Activated CD4-positive, alpha-beta memory T cell treated with anti-CD3 and anti-CD28 coated beads, Interleukin-2, amount 10 ng/mL, durations not matched to agents 7 days and 5 days (primary cell): ENCODE measurements at regions of chr1 and their contacts with region 1.

Region 1: GRCh38 chr1:110780600-110781484 is 92.1 kb upstream of the CD53 start:
- DNase-seq: peak; percentile 80
- H3K4me3 Mint-ChIP-seq: no peak overlapping the region
- H3K27ac Mint-ChIP-seq: no peak overlapping the region
- H3K4me1 Mint-ChIP-seq: peaks cover 35% of the 10 kb centered on the region
- H3K27me3 Mint-ChIP-seq: peaks cover 3% of the 10 kb centered on the region

Region 2: DNA sequence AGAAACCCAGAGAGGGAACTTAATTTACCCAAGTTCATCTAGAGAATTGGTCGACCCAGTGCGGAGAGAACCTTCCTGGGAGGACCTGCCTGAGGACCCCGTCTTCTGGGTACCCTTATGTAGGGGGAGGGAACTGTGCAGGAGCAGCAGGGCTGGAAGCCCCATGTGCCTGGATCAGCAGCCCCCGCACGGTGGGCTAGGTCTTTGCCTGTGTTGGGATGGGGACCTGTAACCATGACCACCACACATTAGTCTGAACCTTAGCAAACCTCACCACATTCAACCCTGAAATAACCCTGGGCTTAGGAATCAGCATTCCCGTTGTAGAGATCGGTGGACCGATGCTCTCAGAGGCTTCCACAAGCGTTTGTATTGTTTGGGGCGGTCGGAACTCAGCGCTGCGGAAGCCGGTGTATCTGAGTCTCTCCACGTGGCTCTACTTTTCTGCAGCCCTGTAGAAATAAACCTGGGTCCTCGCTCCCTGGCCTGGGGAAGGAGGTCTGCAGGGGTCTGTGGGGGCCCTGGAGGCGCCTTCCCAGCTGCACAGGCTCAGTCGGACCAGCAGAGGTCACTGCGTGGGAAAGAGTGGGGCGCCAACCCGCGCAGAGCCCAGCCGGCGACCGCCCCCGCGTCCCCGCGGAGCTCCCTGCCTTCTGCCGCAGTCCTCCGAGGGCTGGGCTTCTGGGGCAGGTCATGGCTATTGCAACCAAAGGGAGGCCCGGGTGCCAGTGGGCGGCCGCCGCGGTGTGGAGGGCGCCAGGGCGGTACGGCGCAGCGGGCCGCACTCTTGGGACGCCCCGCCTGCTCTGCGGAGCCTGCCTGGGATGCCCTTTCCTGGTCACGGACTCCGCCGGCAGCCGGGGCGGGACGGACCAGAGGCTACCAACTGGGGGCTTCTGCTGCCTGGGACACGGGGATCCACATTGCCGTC is 225.7 kb before region 1 on chr1:
- CTCF ChIA-PET with region 1: interaction called, 33 read pairs
- POLR2A ChIA-PET with region 1: no interaction called
- DNase-seq: peak; percentile 54
- H3K4me3 Mint-ChIP-seq: no peak overlapping the region
- H3K27ac Mint-ChIP-seq: no peak overlapping the region
- H3K4me1 Mint-ChIP-seq: peaks cover 12% of the 10 kb centered on the region
- H3K27me3 Mint-ChIP-seq: peaks cover 62% of the 10 kb centered on the region

Region 3: GRCh38 chr1:110612065-110612751 is 168.6 kb before region 1 on chr1:
- CTCF ChIA-PET with region 1: interaction called, 135 read pairs
- POLR2A ChIA-PET with region 1: interaction called, 3 read pairs
- DNase-seq: peak; percentile 11
- H3K4me3 Mint-ChIP-seq: no peak overlapping the region
- H3K27ac Mint-ChIP-seq: no peak overlapping the region
- H3K4me1 Mint-ChIP-seq: peaks cover 58% of the 10 kb centered on the region
- H3K27me3 Mint-ChIP-seq: peaks cover 22% of the 10 kb centered on the region

Region 4: DNA sequence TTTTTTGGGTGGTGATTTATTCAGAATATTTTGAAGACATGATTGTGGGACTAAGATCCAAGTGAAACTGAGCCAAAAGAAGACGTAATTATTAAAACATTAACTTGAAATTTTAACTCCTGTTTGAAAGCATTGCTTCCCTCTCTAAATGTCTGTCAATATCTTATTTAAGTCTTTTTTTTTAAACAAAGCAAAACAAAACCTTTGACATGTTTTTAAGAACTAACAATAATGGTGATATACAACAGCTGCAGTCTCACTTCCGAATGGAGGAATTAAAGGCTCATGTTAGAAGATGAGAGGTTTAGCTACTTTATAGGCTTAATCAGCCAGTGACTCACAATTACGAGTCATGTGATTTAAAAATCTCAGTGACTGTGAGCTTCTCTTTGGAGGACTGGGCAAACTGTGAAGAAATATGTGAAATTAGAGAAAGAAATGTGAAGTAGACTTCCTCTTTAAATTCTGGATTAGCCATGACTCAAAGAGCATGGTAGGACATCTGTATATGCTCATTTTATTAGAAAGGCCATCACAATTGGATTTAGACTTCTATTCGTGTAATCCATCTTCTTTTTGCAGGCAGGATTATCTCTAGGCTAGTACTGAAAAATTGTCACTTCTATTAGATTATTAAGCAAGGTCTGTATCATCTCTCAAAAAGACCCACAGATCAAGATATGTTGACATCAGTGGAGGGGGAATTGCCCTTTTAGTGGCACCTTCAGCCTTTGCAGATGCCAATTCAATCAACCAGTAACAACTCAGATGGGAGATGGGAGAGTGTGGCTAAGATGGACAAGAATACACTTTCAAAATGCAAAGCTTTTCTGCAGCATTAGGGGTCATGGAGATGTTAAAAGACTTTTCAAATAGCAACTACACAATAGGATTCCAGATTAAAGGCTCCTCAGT is 134.8 kb before region 1 on chr1:
- CTCF ChIA-PET with region 1: interaction called, 11 read pairs
- POLR2A ChIA-PET with region 1: no interaction called
- DNase-seq: no peak
- H3K4me3 Mint-ChIP-seq: peak overlapping the region; percentile 1
- H3K27ac Mint-ChIP-seq: no peak overlapping the region
- H3K4me1 Mint-ChIP-seq: peaks cover 47% of the 10 kb centered on the region
- H3K27me3 Mint-ChIP-seq: no peaks in the 10 kb centered on the region

Region 5: GRCh38 chr1:110718452-110718851 is 62.4 kb before region 1 on chr1:
- CTCF ChIA-PET with region 1: no interaction called
- POLR2A ChIA-PET with region 1: no interaction called
- DNase-seq: no peak
- H3K4me3 Mint-ChIP-seq: no peak overlapping the region
- H3K27ac Mint-ChIP-seq: no peak overlapping the region
- H3K4me1 Mint-ChIP-seq: peaks cover 3% of the 10 kb centered on the region
- H3K27me3 Mint-ChIP-seq: peaks cover 6% of the 10 kb centered on the region

Region 6: GRCh38 chr1:110829955-110830553 is 49.2 kb after region 1 on chr1:
- CTCF ChIA-PET with region 1: interaction called, 39 read pairs
- POLR2A ChIA-PET with region 1: no interaction called
- DNase-seq: peak; percentile 18
- H3K4me3 Mint-ChIP-seq: no peak overlapping the region
- H3K27ac Mint-ChIP-seq: no peak overlapping the region
- H3K4me1 Mint-ChIP-seq: peaks cover 3% of the 10 kb centered on the region
- H3K27me3 Mint-ChIP-seq: peaks cover 5% of the 10 kb centered on the region

Region 7: DNA sequence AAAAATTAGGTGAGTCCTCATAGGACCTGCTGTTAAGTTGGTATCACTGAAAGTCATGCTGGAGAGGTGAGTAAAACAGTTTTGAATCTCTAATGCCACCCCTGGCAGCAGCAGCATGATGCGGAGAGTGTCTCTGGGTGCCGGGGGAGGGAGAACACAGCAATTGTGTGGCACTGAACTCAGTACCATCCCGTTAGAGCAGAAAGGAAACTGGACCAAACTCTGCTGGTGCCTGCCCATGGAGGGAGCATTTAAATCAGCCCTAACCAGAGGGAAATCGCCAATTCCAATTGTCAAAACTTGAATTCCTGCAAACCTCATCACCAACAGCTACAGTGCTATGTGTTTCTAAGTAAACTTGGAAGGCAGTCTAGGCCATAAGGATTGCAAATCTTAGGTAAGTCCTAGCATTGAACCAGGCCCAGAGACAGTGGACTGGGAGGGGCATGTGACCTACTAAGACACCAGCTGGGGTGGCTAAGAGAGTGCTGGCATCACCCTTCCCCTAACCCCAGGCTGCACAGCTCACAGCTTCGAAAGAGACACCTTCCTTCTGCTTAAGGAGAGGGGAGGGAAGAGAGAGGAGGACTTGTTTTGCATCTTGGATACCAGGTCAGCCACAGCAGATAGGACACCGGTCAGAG is 122.1 kb after region 1 on chr1:
- CTCF ChIA-PET with region 1: no interaction called
- POLR2A ChIA-PET with region 1: no interaction called
- DNase-seq: no peak
- H3K4me3 Mint-ChIP-seq: no peak overlapping the region
- H3K27ac Mint-ChIP-seq: no peak overlapping the region
- H3K4me1 Mint-ChIP-seq: peaks cover 16% of the 10 kb centered on the region
- H3K27me3 Mint-ChIP-seq: no peaks in the 10 kb centered on the region

Region 8: DNA sequence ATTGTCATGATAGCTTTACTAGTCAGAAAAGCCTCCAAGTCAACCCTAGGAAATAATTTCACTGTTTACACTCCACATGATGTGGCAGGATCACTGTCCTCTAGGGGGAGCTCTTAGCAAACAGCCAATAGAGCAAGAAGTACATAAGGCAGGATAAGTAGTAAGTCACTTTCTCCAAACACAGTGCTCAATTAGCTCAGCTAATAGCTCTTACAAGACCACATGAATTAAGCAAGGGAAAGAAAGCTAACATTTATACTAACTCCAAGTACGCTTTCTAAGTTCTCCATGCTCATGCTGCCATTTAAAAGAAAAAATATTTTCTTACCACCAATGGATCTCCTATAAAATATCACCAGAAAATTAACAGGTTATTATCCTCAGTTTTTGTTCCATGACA is 249.7 kb after region 1 on chr1:
- CTCF ChIA-PET with region 1: interaction called, 10 read pairs
- POLR2A ChIA-PET with region 1: no interaction called
- DNase-seq: peak; percentile 63
- H3K4me3 Mint-ChIP-seq: no peak overlapping the region
- H3K27ac Mint-ChIP-seq: no peak overlapping the region
- H3K4me1 Mint-ChIP-seq: no peaks in the 10 kb centered on the region
- H3K27me3 Mint-ChIP-seq: peaks cover 27% of the 10 kb centered on the region

Region 9: GRCh38 chr1:111570781-111571181 is 789.9 kb after region 1 on chr1:
- CTCF ChIA-PET with region 1: no interaction called
- POLR2A ChIA-PET with region 1: no interaction called
- DNase-seq: peak; percentile 33
- H3K4me3 Mint-ChIP-seq: no peak overlapping the region
- H3K27ac Mint-ChIP-seq: no peak overlapping the region
- H3K4me1 Mint-ChIP-seq: peaks cover 9% of the 10 kb centered on the region
- H3K27me3 Mint-ChIP-seq: no peaks in the 10 kb centered on the region